Esophagus muscularis mucosa (tissue), 4 donors: ENCODE measurements at regions of chr1 and their contacts with region 1.

Region 1: GRCh38 chr1:9101510-9102146 is 27.3 kb downstream of the GPR157 start:
- DNase-seq: no peak
- H3K4me3 ChIP-seq: no peak overlapping the region
- H3K27ac ChIP-seq: no peak overlapping the region
- H3K4me1 ChIP-seq: peaks cover 0 to 4% (median 0%) of the 10 kb centered on the region in 4 donors
- H3K27me3 ChIP-seq: no peaks in the 10 kb centered on the region
- CTCF ChIP-seq: peak; percentile 63 to 76 (median 72)
- EP300 ChIP-seq: no peak
- POLR2A ChIP-seq: no peak

Region 2: DNA sequence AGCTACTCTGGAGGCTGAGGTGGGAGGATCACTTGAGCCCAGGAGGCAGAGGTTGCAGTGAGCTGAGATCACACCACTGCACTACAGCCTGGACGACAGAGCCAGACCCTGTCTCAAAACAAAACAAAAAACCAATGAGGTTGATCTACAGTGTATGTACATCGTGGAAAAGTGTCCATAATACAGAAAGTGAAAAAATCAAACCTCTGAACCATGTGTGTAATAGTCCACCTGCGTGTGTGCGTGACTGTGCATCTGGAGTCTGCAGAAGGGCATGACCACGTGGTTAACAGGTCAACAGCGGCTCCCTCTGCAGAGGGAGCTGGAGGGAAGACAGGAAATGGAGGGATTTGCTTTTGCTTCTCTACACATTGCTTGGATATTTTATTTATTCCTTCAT is 190.7 kb before region 1 on chr1:
- intact Hi-C with region 1: loop called (anchors 10 kb)
- DNase-seq: no peak
- H3K4me3 ChIP-seq: no peak overlapping the region
- H3K27ac ChIP-seq: no peak overlapping the region
- H3K4me1 ChIP-seq: peaks cover 0 to 4% (median under 1%) of the 10 kb centered on the region in 4 donors
- H3K27me3 ChIP-seq: no peaks in the 10 kb centered on the region
- CTCF ChIP-seq: no peak
- EP300 ChIP-seq: no peak
- POLR2A ChIP-seq: no peak

Region 3: GRCh38 chr1:9004700-9005394 is 96.8 kb before region 1 on chr1:
- intact Hi-C with region 1: loop called (anchors 5 kb)
- DNase-seq: peak; percentile 95
- H3K4me3 ChIP-seq: no peak overlapping the region
- H3K27ac ChIP-seq: no peak overlapping the region
- H3K4me1 ChIP-seq: peaks cover 0 to 8% (median 0%) of the 10 kb centered on the region in 4 donors
- H3K27me3 ChIP-seq: no peaks in the 10 kb centered on the region
- CTCF ChIP-seq: peak; percentile 90 to 96 (median 94)
- EP300 ChIP-seq: no peak
- POLR2A ChIP-seq: no peak

Region 4: DNA sequence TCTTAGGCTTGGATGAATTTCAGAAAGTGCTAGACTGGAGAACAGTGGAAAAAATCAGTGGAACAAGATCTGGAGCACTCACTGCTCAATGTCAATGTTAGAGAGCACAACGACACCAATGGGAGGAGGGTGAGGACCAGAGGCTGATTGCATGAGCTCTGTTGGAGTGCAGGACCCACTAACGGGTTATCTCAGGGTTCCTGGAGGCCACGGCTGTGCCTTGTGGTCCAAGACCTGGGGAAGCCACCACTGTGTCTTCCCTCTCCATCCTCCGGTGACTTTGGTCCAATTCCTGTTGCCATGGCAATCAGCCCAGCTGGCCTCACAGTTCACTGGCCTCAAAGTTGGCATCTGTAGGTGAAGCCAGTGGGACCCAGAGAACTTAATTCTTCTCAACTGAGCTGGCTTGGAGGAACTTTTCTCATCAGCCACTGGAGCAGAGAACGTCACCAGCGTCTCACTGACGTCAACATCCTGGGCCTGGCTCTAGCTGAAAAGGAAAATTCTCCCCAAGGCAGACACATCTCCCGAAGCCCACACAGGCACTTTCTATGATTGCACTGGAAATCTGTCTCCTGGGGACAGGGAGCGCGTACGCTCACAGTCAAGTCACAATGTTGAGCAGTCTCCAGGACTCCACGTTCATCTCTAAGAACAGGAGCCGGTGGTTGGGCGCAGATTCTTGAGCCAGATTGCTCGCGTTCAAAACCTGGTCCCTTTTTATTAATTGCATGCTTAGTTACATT is 49.1 kb after region 1 on chr1:
- intact Hi-C with region 1: no loop called
- DNase-seq: no peak
- H3K4me3 ChIP-seq: no peak overlapping the region
- H3K27ac ChIP-seq: peak overlapping the region; percentile 38 to 65 (median 52)
- H3K4me1 ChIP-seq: peaks cover 13 to 20% (median 16%) of the 10 kb centered on the region in 4 donors
- H3K27me3 ChIP-seq: no peaks in the 10 kb centered on the region
- CTCF ChIP-seq: no peak
- EP300 ChIP-seq: no peak
- POLR2A ChIP-seq: no peak

Region 5: GRCh38 chr1:9181176-9181906 is 79.7 kb after region 1 on chr1:
- intact Hi-C with region 1: no loop called
- DNase-seq: no peak
- H3K4me3 ChIP-seq: peak overlapping the region; percentile 69 to 87 (median 80)
- H3K27ac ChIP-seq: peak overlapping the region; percentile 31 to 64 (median 56)
- H3K4me1 ChIP-seq: peaks cover 29 to 41% (median 36%) of the 10 kb centered on the region in 4 donors
- H3K27me3 ChIP-seq: peaks cover 0 to 16% (median 3%) of the 10 kb centered on the region in 4 donors
- CTCF ChIP-seq: peak; percentile 78 to 96 (median 90)
- EP300 ChIP-seq: no peak
- POLR2A ChIP-seq: no peak